ENCODE measurements at regions of chr6 and their contacts with region 1.

Region 1: DNA sequence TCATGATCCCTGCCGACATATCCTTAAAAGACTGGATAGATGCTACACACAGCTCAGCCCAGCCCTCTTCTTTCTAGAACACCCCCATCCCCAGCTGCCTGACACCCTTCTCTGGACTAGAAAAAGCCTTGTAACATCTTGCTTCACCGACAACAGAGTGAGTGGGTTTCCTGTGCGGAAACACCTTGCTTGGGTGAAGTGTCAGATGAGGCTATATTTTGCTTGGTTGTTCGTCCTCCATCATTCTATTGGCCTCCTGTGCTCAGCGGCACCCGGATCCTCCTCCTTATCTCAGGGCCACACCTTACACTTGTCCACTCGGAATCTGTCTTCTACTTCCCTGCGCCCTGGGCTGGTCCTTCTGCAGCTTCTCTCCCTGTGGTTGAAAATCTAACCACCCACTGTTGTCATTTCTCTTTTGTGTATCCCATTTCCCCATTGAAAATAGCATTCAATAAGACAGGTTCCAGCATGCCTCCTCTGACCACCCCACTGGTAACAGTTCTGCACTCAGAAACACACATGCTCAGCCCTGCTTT is 101.3 kb upstream of the MLN start:
- DNase-seq: peak; percentile 78
- H3K4me3 Mint-ChIP-seq: peak overlapping the region; percentile 66
- H3K27ac Mint-ChIP-seq: peak overlapping the region; percentile 97
- H3K4me1 Mint-ChIP-seq: peaks cover 85% of the 10 kb centered on the region
- H3K27me3 Mint-ChIP-seq: peaks cover 2% of the 10 kb centered on the region

Region 2: DNA sequence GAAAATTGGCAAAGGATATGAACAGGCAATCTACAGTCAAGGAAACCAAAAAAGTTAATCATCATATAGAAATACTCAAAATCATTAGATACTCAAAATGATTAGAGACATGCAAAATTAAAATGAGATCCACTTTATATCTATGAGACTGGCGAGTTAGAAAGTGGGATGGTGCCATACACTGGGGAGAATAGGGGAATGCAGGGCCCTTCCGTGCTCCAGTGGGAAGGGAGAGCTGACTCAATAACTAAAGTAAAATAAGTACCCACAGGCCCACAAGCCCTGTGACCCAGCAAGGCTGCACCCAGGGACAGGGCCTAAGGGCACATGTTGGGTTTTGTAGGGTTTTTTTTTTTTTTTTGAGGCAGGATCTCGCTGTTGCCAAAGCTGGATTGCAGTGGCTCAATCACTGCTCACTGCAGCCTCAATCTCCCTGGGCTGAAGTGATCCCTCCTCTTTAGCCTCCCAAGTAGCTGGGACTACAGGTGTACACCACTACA is 370.0 kb before region 1 on chr6:
- CTCF ChIA-PET with region 1: no interaction called
- POLR2A ChIA-PET with region 1: interaction called, 14 read pairs
- DNase-seq: no peak
- H3K4me3 Mint-ChIP-seq: no peak overlapping the region
- H3K27ac Mint-ChIP-seq: no peak overlapping the region
- H3K4me1 Mint-ChIP-seq: peaks cover 19% of the 10 kb centered on the region
- H3K27me3 Mint-ChIP-seq: peaks cover 2% of the 10 kb centered on the region

Region 3: GRCh38 chr6:33794891-33795623 is 110.1 kb before region 1 on chr6:
- CTCF ChIA-PET with region 1: no interaction called
- POLR2A ChIA-PET with region 1: no interaction called
- DNase-seq: no peak
- H3K4me3 Mint-ChIP-seq: no peak overlapping the region
- H3K27ac Mint-ChIP-seq: no peak overlapping the region
- H3K4me1 Mint-ChIP-seq: peaks cover 6% of the 10 kb centered on the region
- H3K27me3 Mint-ChIP-seq: peaks cover 18% of the 10 kb centered on the region

Region 4: GRCh38 chr6:33926451-33926850 is 21.3 kb after region 1 on chr6:
- CTCF ChIA-PET with region 1: no interaction called
- POLR2A ChIA-PET with region 1: no interaction called
- DNase-seq: no peak
- H3K4me3 Mint-ChIP-seq: no peak overlapping the region
- H3K27ac Mint-ChIP-seq: no peak overlapping the region
- H3K4me1 Mint-ChIP-seq: peaks cover 2% of the 10 kb centered on the region
- H3K27me3 Mint-ChIP-seq: peaks cover 3% of the 10 kb centered on the region